Activated naive CD8-positive, alpha-beta T cell treated with anti-CD3 and anti-CD28 coated beads, Interleukin-2, amount 10 ng/mL, durations not matched to agents 7 days and 5 days (primary cell): ENCODE measurements at regions of chr20 and their contacts with region 1.

Region 1: GRCh38 chr20:3820048-3820900 is at the start of gene AP5S1:
- DNase-seq: peak; percentile 97
- ATAC-seq: peak; percentile 81
- H3K4me3 Mint-ChIP-seq: peak within 1 kb of the TSS; percentile 86
- H3K27ac Mint-ChIP-seq: peak within 1 kb of the TSS; percentile 98
- H3K4me1 Mint-ChIP-seq: peaks cover 40% of the 10 kb centered on the region
- H3K27me3 Mint-ChIP-seq: no peaks in the 10 kb centered on the region
- total RNA-seq, gene AP5S1: 11.1 to 12.5 TPM

Region 2: GRCh38 chr20:3767427-3768341 is 52.6 kb before region 1 on chr20 and contains the start of gene ADISSP:
- POLR2A ChIA-PET with region 1: interaction called, 24 read pairs
- DNase-seq: peak; percentile 98
- ATAC-seq: peak; percentile 96
- H3K4me3 Mint-ChIP-seq: peak within 1 kb of the TSS; percentile 91
- H3K27ac Mint-ChIP-seq: peak within 1 kb of the TSS; percentile 93
- H3K4me1 Mint-ChIP-seq: peaks cover 17% of the 10 kb centered on the region
- H3K27me3 Mint-ChIP-seq: peaks cover 11% of the 10 kb centered on the region
- total RNA-seq, gene ADISSP: 21.9 to 22.1 TPM

Region 3: DNA sequence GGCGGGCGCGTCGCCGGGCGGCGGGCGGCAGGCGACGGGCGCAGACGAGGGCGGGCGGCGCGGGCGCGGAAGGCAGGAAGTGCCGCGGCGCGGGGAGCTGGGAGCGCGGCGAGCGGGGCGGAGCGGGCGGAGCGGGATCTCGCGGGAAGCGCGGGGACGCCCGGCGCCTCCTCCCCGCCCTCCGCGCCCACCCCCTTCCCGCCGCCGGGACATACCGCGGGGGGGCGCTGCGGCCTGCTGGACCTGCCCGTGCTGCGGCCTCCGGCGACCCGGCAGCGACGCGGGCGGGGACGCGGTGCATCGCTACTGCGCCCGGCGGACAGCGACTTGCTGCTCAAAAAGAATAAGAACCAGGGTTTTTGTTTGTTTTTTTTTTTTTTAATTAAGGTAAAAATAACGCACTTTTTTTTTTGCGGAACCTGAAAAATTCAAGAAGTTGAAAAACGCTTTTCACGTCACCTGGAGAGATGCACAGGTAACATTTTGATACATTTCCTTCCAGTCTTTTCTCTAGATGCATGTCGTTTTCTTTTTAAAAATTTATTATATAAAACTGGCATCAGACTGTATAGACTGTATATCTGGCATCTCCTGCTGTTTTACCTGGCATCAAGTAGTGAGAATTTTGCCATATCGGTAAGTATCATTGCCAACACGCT is 33.5 kb before region 1 on chr20 and contains the start of gene CENPB:
- POLR2A ChIA-PET with region 1: interaction called, 52 read pairs
- DNase-seq: peak; percentile 99
- ATAC-seq: peak; percentile 94
- H3K4me3 Mint-ChIP-seq: peak within 1 kb of the TSS; percentile 78
- H3K27ac Mint-ChIP-seq: peak within 1 kb of the TSS; percentile 65
- H3K4me1 Mint-ChIP-seq: peaks cover 26% of the 10 kb centered on the region
- H3K27me3 Mint-ChIP-seq: peaks cover 7% of the 10 kb centered on the region
- total RNA-seq, gene CENPB: 63.3 to 65.7 TPM

Region 4: DNA sequence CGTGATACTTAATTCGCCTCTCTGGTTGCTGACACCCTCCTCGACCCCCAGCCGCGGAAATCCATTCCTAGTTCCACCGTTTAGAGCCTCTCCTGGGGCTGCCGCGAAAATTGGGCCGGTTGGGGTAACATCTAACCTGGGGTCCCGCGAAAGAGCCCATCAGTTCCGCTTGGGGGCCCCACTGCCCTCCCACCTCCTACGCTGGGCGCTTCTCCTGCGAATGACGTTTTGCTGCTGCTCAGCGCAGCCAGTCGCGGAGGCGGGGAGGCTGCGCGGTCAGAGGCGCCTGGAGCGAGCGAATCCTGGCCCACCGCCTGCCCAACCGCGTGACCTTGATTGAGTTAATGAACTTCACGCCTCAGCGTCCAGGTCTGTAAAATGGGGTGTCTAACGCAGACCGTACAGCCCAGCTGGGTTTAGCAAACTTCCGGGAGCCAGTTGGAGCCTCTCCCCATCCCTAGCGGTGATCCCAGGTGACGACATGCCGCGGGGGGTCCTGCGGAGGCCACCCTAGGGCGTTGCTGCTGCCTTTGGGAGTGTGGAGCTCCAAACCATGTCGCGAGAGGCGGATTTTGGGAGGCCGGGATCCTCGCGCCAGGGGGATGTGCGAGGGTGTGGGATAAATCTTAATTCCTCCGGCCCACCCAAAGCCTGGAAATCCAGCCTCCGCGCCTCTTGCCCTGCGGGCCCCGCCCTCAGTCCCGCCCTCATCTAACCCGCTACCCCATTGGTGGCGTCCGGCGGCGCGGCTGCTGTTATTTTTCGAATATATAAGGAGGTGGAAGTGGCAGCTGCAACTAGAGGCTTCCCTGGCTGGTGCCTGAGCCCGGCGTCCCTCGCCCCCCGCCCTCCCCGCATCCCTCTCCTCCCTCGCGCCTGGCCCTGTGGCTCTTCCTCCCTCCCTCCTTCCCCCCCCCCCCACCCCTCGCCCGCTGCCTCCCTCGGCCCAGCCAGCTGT is 24.5 kb before region 1 on chr20 and contains the start of gene CDC25B:
- POLR2A ChIA-PET with region 1: interaction called, 16 read pairs
- DNase-seq: peak; percentile 87
- ATAC-seq: peak; percentile 68
- H3K4me3 Mint-ChIP-seq: peak within 1 kb of the TSS; percentile 90
- H3K27ac Mint-ChIP-seq: peak within 1 kb of the TSS; percentile 92
- H3K4me1 Mint-ChIP-seq: peaks cover 34% of the 10 kb centered on the region
- H3K27me3 Mint-ChIP-seq: no peaks in the 10 kb centered on the region
- total RNA-seq, gene CDC25B: 263 to 264 TPM

Region 5: DNA sequence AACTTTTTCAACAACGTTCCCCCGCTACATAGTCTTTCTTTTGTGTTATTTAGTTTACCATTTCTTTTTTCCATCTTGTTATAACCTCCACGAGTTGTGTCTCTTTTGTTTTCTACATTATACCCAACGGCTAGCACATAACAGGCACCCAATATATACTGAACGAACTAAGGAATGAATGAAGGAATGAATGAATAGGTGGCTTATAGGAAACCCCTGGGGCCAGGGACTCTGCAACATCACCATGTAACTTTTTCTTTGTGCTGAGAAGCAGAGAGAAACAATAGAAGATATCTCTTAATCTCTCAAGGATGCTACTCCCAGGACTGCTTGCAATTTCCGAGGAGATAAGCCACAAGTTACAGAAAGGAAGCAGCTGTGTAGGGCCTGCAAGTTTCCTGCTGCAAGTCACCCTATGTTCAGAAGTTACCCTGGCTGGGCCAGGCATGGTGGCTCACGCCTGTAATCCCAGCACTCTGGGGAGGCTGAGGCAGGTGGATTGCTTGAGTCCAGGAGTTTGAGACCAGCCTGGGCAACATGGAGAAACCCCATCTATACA is 19.0 kb after region 1 on chr20:
- POLR2A ChIA-PET with region 1: interaction called, 13 read pairs
- DNase-seq: no peak
- ATAC-seq: peak; percentile 58
- H3K4me3 Mint-ChIP-seq: no peak overlapping the region
- H3K27ac Mint-ChIP-seq: no peak overlapping the region
- H3K4me1 Mint-ChIP-seq: peaks cover 8% of the 10 kb centered on the region
- H3K27me3 Mint-ChIP-seq: no peaks in the 10 kb centered on the region

Region 6: GRCh38 chr20:3846740-3847428 is 26.6 kb after region 1 on chr20 and contains the start of gene MAVS:
- POLR2A ChIA-PET with region 1: interaction called, 10 read pairs
- DNase-seq: peak; percentile 92
- ATAC-seq: peak; percentile 96
- H3K4me3 Mint-ChIP-seq: peak within 1 kb of the TSS; percentile 89
- H3K27ac Mint-ChIP-seq: peak within 1 kb of the TSS; percentile 89
- H3K4me1 Mint-ChIP-seq: peaks cover 22% of the 10 kb centered on the region
- H3K27me3 Mint-ChIP-seq: no peaks in the 10 kb centered on the region
- total RNA-seq, gene MAVS: 36.3 to 36.8 TPM

Region 7: GRCh38 chr20:3871550-3872297 is 51.5 kb after region 1 on chr20:
- POLR2A ChIA-PET with region 1: no interaction called
- DNase-seq: no peak
- ATAC-seq: no peak
- H3K4me3 Mint-ChIP-seq: no peak overlapping the region
- H3K27ac Mint-ChIP-seq: no peak overlapping the region
- H3K4me1 Mint-ChIP-seq: peaks cover 2% of the 10 kb centered on the region
- H3K27me3 Mint-ChIP-seq: no peaks in the 10 kb centered on the region